HEK293 (cell line): ENCODE measurements at regions of chr5 and their contacts with region 1.

Region 1: GRCh38 chr5:7815892-7816534 is 34.9 kb downstream of the CFAP90 start:
- H3K4me3 ChIP-seq: no peak overlapping the region
- H3K27ac ChIP-seq: no peak overlapping the region
- H3K4me1 ChIP-seq: peaks cover 3% of the 10 kb centered on the region; the same call in 1 of the 2 replicates
- CTCF ChIP-seq: peak; percentile 95

Region 2: GRCh38 chr5:7261049-7261448 is 555.0 kb before region 1 on chr5:
- CTCF ChIA-PET with region 1: interaction called, 20 read pairs
- POLR2A ChIA-PET with region 1: no interaction called
- H3K4me3 ChIP-seq: no peak overlapping the region
- H3K27ac ChIP-seq: no peak overlapping the region
- H3K4me1 ChIP-seq: no peaks in the 10 kb centered on the region
- CTCF ChIP-seq: peak; percentile 18; the same call in 1 of the 2 replicates

Region 3: GRCh38 chr5:7678030-7678429 is 138.0 kb before region 1 on chr5:
- CTCF ChIA-PET with region 1: no interaction called
- POLR2A ChIA-PET with region 1: no interaction called
- H3K4me3 ChIP-seq: no peak overlapping the region
- H3K27ac ChIP-seq: no peak overlapping the region
- H3K4me1 ChIP-seq: no peaks in the 10 kb centered on the region
- CTCF ChIP-seq: no peak

Region 4: DNA sequence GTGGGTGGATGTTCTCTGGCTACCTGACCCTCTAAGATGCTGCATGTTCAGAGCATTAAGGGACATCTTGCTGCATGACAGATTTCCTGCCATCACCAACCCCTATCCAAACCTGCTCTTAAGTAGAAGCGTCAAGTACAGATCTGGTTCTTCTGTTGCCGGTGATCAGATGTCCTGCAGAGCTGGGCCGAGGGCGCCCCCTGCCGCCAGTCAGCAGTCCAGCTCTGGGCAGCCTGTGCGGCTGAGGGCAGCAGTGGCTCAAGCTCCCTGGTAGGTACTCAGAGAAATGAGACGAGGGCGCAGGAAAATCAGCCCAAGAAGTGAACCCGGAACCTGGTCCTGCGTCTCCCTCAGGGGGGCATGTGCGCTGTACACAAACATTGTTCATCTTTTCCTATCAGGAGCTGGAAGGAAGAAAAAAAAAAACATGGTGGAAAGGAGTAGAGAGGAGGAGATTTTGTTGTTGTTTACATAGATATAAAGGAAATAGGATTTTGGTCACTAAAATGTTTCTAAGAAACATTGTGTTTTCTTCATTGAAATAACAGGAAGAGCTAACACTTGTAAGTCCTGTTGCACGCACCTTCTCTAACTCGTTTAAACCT is 60.9 kb before region 1 on chr5:
- CTCF ChIA-PET with region 1: interaction called, 32 read pairs
- POLR2A ChIA-PET with region 1: no interaction called
- H3K4me3 ChIP-seq: no peak overlapping the region
- H3K27ac ChIP-seq: no peak overlapping the region
- H3K4me1 ChIP-seq: peaks cover 5% of the 10 kb centered on the region; the same call in 1 of the 2 replicates
- CTCF ChIP-seq: peak; percentile 67; the same call in 1 of the 2 replicates

Region 5: DNA sequence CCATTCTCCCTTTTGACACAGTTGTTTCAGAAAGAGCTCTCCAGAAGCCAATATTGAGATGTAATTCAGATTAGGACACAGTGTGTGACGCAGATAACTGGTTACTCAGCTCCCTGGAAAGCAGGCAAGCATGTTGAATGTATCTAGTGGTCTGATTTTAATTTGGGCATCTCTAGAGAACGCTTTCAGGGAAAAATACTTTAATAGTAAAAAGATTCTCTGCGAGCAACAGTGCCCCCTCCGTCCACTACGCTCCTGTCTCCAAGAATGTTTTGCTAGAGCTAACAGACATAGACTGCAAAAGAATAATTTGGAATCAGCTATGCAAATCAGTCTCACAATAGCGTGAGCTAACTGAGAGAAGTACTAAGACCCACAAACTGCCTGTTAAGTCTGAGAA is 11.6 kb after region 1 on chr5:
- CTCF ChIA-PET with region 1: interaction called, 46 read pairs
- POLR2A ChIA-PET with region 1: no interaction called
- H3K4me3 ChIP-seq: no peak overlapping the region
- H3K27ac ChIP-seq: no peak overlapping the region
- H3K4me1 ChIP-seq: no peaks in the 10 kb centered on the region
- CTCF ChIP-seq: no peak

Region 6: GRCh38 chr5:7850395-7851239 is 34.6 kb after region 1 on chr5 and contains the start of gene CFAP90:
- CTCF ChIA-PET with region 1: interaction called, 23 read pairs
- POLR2A ChIA-PET with region 1: no interaction called
- H3K4me3 ChIP-seq: peak within 1 kb of the TSS; percentile 65
- H3K27ac ChIP-seq: no peak within 1 kb of the TSS; the same call in 1 of the 2 replicates
- H3K4me1 ChIP-seq: no peaks in the 10 kb centered on the region
- CTCF ChIP-seq: peak; percentile 68